Dendritic cell treated with granulocyte-macrophage colony-stimulating factor and Interleukin-4, amounts not matched to agents 40 ng/mL and 50 ng/mL, for 4 days (primary cell): ENCODE measurements at regions of chr12 and their contacts with region 1.

Region 1: GRCh38 chr12:25208554-25208953 is 13.5 kb downstream of the ETFRF1 start:
- H3K4me3 Mint-ChIP-seq: no peak overlapping the region
- H3K27ac Mint-ChIP-seq: no peak overlapping the region
- H3K4me1 Mint-ChIP-seq: no peaks in the 10 kb centered on the region
- H3K27me3 Mint-ChIP-seq: no peaks in the 10 kb centered on the region

Region 2: GRCh38 chr12:25241167-25242020 is 32.8 kb after region 1 on chr12:
- intact Hi-C with region 1: loop called (anchors 5 kb)
- H3K4me3 Mint-ChIP-seq: no peak overlapping the region
- H3K27ac Mint-ChIP-seq: no peak overlapping the region
- H3K4me1 Mint-ChIP-seq: peaks cover 19% of the 10 kb centered on the region
- H3K27me3 Mint-ChIP-seq: no peaks in the 10 kb centered on the region

Region 3: GRCh38 chr12:25250744-25251730 is 42.5 kb after region 1 on chr12 and contains the start of gene KRAS:
- intact Hi-C with region 1: loop called (anchors 1 kb)
- H3K4me3 Mint-ChIP-seq: peak within 1 kb of the TSS; percentile 94
- H3K27ac Mint-ChIP-seq: peak within 1 kb of the TSS; percentile 93
- H3K4me1 Mint-ChIP-seq: peaks cover 15% of the 10 kb centered on the region
- H3K27me3 Mint-ChIP-seq: peaks cover 7% of the 10 kb centered on the region

Region 4: GRCh38 chr12:25386831-25387731 is 178.5 kb after region 1 on chr12:
- intact Hi-C with region 1: loop called (anchors 1 kb)
- H3K4me3 Mint-ChIP-seq: peak overlapping the region; percentile 89
- H3K27ac Mint-ChIP-seq: peak overlapping the region; percentile 100
- H3K4me1 Mint-ChIP-seq: peaks cover 39% of the 10 kb centered on the region
- H3K27me3 Mint-ChIP-seq: peaks cover 4% of the 10 kb centered on the region

Region 5: DNA sequence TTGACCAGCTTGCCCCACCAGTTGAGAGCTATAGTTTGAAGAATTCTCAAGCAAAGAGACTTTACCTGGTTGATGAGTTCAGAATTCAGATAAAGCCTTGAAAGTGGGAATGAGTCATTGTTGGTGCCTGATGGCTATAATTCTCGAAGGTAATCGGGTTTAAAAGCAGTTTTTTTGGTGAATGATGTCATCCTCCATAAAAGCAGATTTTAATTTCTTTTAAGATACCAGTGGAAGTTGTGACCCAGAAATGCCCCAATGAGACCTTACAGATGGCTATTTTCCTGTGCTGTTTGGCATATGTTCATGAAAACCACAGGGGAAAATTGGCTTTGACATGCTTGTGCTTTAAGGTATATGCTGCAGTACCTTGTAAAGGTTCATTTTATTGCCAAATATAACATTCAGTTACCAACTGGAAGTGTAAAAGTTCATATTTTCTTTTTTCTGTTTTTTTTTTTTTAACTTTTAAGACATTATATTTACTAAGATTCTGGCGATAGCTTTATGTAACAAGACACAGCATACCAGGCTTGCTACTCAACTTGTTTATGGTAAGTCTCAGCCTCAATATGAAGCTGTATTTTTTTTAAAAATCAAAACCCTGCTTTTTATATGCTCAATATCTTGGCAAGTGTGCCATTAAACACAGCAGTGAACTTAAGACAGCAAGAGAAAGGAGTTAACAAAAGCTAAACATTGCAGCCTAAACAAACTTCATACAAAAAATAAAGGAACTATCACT is 225.2 kb after region 1 on chr12:
- intact Hi-C with region 1: no loop called
- H3K4me3 Mint-ChIP-seq: no peak overlapping the region
- H3K27ac Mint-ChIP-seq: no peak overlapping the region
- H3K4me1 Mint-ChIP-seq: peaks cover 7% of the 10 kb centered on the region
- H3K27me3 Mint-ChIP-seq: peaks cover 2% of the 10 kb centered on the region

Region 6: DNA sequence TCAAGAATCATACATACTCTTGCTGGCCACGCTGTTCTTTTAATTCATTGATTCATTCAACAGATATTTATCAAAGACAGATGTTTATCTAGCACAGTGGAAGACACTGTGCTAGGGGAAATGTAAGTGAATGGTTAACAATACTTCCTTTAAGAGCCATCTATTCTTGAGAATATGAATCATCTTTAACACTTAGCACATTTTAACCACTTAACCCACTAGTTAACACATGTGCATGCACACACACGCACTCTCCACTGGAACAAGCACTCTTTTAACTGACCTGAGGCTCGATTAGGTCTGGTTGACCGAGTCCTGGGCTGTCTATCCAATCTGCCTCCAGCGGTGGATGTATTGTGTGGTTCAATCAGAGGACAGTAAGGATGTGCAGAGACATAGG is 310.0 kb after region 1 on chr12:
- intact Hi-C with region 1: no loop called
- H3K4me3 Mint-ChIP-seq: no peak overlapping the region
- H3K27ac Mint-ChIP-seq: no peak overlapping the region
- H3K4me1 Mint-ChIP-seq: no peaks in the 10 kb centered on the region
- H3K27me3 Mint-ChIP-seq: no peaks in the 10 kb centered on the region